Caco-2 (cell line): ENCODE measurements at regions of chr4 and their contacts with region 1.

Region 1: GRCh38 chr4:163554870-163555465 is 60.5 kb downstream of the TMA16 start:
- DNase-seq: no peak
- H3K4me3 ChIP-seq: no peak overlapping the region
- H3K4me3 Mint-ChIP-seq: no peak overlapping the region
- H3K27ac Mint-ChIP-seq: no peak overlapping the region
- H3K4me1 ChIP-seq: no peaks in the 10 kb centered on the region
- H3K4me1 Mint-ChIP-seq: no peaks in the 10 kb centered on the region
- H3K27me3 ChIP-seq: no peaks in the 10 kb centered on the region
- H3K27me3 Mint-ChIP-seq: peaks cover 4% of the 10 kb centered on the region
- CTCF ChIP-seq: peak; percentile 42 to 49

Region 2: DNA sequence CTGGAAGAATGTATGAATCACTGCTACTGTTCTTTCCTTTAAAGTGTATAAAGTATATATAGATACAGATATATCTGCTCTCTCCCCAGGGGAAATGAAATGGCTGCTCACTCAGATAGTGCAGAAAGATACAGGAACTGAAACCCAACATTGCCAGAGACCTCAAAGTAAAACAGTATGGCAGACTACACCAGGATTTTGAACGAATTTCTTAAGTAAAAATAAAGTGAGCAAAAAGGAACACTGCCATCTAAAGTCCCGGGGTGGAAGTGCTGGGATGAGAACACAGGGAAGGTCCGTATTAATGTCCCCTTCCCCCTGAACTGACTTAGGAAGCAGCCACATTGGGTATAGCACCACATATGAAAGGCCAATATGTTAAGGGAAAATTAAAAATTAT is 32.9 kb after region 1 on chr4:
- CTCF ChIA-PET with region 1: no interaction called
- POLR2A ChIA-PET with region 1: no interaction called
- intact Hi-C with region 1: no loop called
- DNase-seq: peak in 1 of 2 experiments; percentile 28
- H3K4me3 ChIP-seq: no peak overlapping the region
- H3K4me3 Mint-ChIP-seq: no peak overlapping the region
- H3K27ac Mint-ChIP-seq: no peak overlapping the region
- H3K4me1 ChIP-seq: no peaks in the 10 kb centered on the region
- H3K4me1 Mint-ChIP-seq: no peaks in the 10 kb centered on the region
- H3K27me3 ChIP-seq: no peaks in the 10 kb centered on the region
- H3K27me3 Mint-ChIP-seq: no peaks in the 10 kb centered on the region
- CTCF ChIP-seq: peak in 1 of 2 experiments; percentile 28

Region 3: GRCh38 chr4:163600727-163601126 is 45.8 kb after region 1 on chr4:
- CTCF ChIA-PET with region 1: interaction called, 3 read pairs
- POLR2A ChIA-PET with region 1: no interaction called
- intact Hi-C with region 1: loop called (anchors 5 kb)
- DNase-seq: no peak
- H3K4me3 ChIP-seq: no peak overlapping the region
- H3K4me3 Mint-ChIP-seq: no peak overlapping the region
- H3K27ac Mint-ChIP-seq: no peak overlapping the region
- H3K4me1 ChIP-seq: peaks cover 13% of the 10 kb centered on the region
- H3K4me1 Mint-ChIP-seq: peaks cover 15% of the 10 kb centered on the region
- H3K27me3 ChIP-seq: no peaks in the 10 kb centered on the region
- H3K27me3 Mint-ChIP-seq: no peaks in the 10 kb centered on the region
- CTCF ChIP-seq: no peak

Region 4: GRCh38 chr4:163613383-163613782 is 58.4 kb after region 1 on chr4:
- CTCF ChIA-PET with region 1: no interaction called
- POLR2A ChIA-PET with region 1: no interaction called
- intact Hi-C with region 1: no loop called
- DNase-seq: no peak
- H3K4me3 ChIP-seq: no peak overlapping the region
- H3K4me3 Mint-ChIP-seq: no peak overlapping the region
- H3K27ac Mint-ChIP-seq: no peak overlapping the region
- H3K4me1 ChIP-seq: no peaks in the 10 kb centered on the region
- H3K4me1 Mint-ChIP-seq: no peaks in the 10 kb centered on the region
- H3K27me3 ChIP-seq: no peaks in the 10 kb centered on the region
- H3K27me3 Mint-ChIP-seq: peaks cover 3% of the 10 kb centered on the region
- CTCF ChIP-seq: no peak

Region 5: DNA sequence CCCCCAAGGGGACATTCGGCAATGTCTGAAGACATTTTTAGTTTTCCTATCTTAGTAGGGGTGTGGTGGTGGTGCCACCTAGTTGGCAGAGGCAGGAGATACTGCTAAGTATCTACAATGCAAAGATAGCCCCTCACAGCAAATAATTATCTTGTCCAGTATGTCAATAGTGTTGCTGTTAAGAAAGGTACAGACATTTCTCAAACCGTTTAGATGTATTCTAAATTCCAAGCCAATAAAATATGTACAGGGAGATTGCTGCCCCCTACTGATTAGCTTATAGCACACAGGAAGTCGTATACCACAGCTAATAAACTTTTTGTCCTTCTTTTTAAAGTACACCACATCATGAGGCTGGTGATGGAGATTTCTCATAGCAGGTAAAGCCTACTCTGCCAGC is 200.0 kb after region 1 on chr4:
- CTCF ChIA-PET with region 1: interaction called, 5 read pairs
- POLR2A ChIA-PET with region 1: no interaction called
- intact Hi-C with region 1: loop called (anchors 1 kb)
- DNase-seq: no peak
- H3K4me3 ChIP-seq: no peak overlapping the region
- H3K4me3 Mint-ChIP-seq: no peak overlapping the region
- H3K27ac Mint-ChIP-seq: no peak overlapping the region
- H3K4me1 ChIP-seq: no peaks in the 10 kb centered on the region
- H3K4me1 Mint-ChIP-seq: no peaks in the 10 kb centered on the region
- H3K27me3 ChIP-seq: no peaks in the 10 kb centered on the region
- H3K27me3 Mint-ChIP-seq: no peaks in the 10 kb centered on the region
- CTCF ChIP-seq: peak in 1 of 2 experiments; percentile 27

Region 6: GRCh38 chr4:164731827-164732474 is 1177.0 kb after region 1 on chr4:
- CTCF ChIA-PET with region 1: interaction called, 3 read pairs
- POLR2A ChIA-PET with region 1: no interaction called
- intact Hi-C with region 1: loop called (anchors 1 kb)
- DNase-seq: peak; percentile 37 to 63
- H3K4me3 ChIP-seq: no peak overlapping the region
- H3K4me3 Mint-ChIP-seq: no peak overlapping the region
- H3K27ac Mint-ChIP-seq: no peak overlapping the region
- H3K4me1 ChIP-seq: no peaks in the 10 kb centered on the region
- H3K4me1 Mint-ChIP-seq: no peaks in the 10 kb centered on the region
- H3K27me3 ChIP-seq: no peaks in the 10 kb centered on the region
- H3K27me3 Mint-ChIP-seq: peaks cover 3% of the 10 kb centered on the region
- CTCF ChIP-seq: peak; percentile 78 to 84